Esophagus muscularis mucosa (tissue), 4 donors: ENCODE measurements at regions of chr13 and their contacts with region 1.

Region 1: GRCh38 chr13:101127741-101128353 is 288.5 kb downstream of the NALCN start:
- DNase-seq: no peak
- H3K4me3 ChIP-seq: no peak overlapping the region
- H3K27ac ChIP-seq: no peak overlapping the region
- H3K4me1 ChIP-seq: no peaks in the 10 kb centered on the region
- H3K27me3 ChIP-seq: no peaks in the 10 kb centered on the region
- CTCF ChIP-seq: peak; percentile 63 to 72 (median 68)
- EP300 ChIP-seq: no peak
- POLR2A ChIP-seq: no peak

Region 2: DNA sequence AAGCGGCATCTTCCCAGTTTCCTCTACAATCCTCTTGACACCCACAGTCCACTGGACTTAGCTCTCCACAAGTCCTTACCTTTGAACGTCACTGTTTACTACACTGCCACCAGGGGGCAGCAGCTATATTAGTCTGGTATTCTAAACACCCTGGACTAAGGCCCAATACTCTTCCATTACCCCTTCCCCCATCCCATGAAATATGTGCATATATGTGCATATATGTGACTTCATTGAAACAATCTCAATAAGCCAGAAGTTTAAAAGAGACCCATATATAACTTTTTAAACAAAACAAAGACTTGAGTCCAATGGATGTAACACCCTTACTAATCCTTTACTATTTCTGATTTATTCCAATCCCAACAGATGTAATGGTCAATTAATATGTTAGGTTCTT is 554.7 kb before region 1 on chr13:
- intact Hi-C with region 1: loop called (anchors 10 kb)
- DNase-seq: no peak
- H3K4me3 ChIP-seq: no peak overlapping the region
- H3K27ac ChIP-seq: no peak overlapping the region
- H3K4me1 ChIP-seq: no peaks in the 10 kb centered on the region
- H3K27me3 ChIP-seq: no peaks in the 10 kb centered on the region
- CTCF ChIP-seq: peak; percentile 56 to 62 (median 59)
- EP300 ChIP-seq: no peak
- POLR2A ChIP-seq: no peak